HAP-1 (cell line): ENCODE measurements at regions of chr20 and their contacts with region 1.

Region 1: DNA sequence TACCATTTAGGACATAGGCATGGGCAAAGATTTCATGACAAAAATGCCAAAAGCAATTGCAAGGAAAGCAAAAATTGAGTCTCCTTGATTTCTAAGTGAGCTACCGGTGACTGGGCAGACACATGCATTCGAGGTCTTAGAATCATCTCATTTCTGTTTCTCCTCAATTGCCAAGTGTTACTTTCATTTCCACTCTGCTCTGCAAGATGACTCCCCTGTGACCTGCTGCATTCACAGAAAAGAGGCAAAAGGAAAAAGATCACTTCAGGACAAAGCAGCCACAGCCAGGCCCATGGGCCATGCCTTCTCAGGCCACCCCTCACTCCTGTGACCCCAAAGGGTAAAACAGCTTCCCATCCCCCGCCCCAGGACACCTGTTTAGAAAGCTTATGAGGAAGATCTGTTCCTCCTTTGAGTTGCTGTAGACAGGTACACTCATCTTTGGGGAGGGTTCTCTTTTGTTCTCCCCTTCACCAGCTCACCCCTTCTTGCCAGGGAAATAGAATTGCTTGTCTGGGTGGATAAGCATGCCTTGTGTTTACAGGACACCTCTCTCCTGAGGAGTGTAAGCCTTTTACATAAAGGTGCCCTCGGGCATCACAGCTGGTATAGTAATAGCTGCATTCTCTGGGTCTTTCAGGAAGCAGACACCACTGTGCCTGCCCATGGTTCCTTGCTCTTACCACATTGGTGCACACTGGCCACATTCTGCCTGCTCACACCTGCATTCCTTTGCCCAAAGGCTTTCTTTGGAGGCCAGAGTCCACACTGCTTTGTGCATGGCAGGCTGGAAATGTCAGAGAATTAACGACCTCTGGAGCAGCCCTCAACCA is 105.0 kb downstream of the SLC24A3 start:
- DNase-seq: no peak
- H3K4me3 ChIP-seq: no peak overlapping the region
- H3K4me1 ChIP-seq: no peaks in the 10 kb centered on the region
- H3K27me3 ChIP-seq: no peaks in the 10 kb centered on the region

Region 2: GRCh38 chr20:18886756-18887155 is 430.7 kb before region 1 on chr20:
- in situ Hi-C with region 1: no loop called
- DNase-seq: no peak
- H3K4me3 ChIP-seq: no peak overlapping the region
- H3K4me1 ChIP-seq: no peaks in the 10 kb centered on the region
- H3K27me3 ChIP-seq: no peaks in the 10 kb centered on the region

Region 3: DNA sequence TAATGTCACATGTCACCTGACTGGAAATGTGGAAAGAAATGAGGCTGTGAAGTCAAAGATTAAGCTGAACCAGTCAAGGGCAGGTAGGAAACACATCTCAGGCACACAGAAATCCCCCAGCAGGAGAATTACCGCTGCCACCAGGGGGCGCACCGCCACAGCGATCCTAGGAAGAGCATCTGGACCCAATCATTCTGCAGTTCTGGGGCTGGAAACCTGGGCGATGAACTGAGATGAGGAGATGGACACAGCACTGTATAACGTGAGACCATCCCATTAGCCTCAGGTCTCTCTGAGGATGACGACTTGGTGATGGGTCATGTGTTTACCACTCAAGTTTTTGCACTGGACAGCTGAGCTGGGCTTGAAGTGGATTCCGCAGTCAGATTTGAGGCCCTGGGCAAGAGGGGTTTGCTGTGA is 111.5 kb before region 1 on chr20:
- in situ Hi-C with region 1: loop called (anchors 25 kb)
- DNase-seq: peak; percentile 20 to 81
- H3K4me3 ChIP-seq: no peak overlapping the region
- H3K4me1 ChIP-seq: no peaks in the 10 kb centered on the region
- H3K27me3 ChIP-seq: peaks cover 2% of the 10 kb centered on the region; the same call in 1 of the 2 replicates